HepG2 (cell line): ENCODE measurements at regions of chr4 and their contacts with region 1.

Region 1: GRCh38 chr4:94516067-94516466 is 64.3 kb downstream of the PDLIM5 start:
- DNase-seq: peak; percentile 76
- ATAC-seq: peak; percentile 65; the same call in 2 of the 3 replicates
- H3K4me3 ChIP-seq: no peak overlapping the region
- H3K27ac ChIP-seq: no peak overlapping the region
- H3K4me1 ChIP-seq: peaks cover 26% of the 10 kb centered on the region
- H3K27me3 ChIP-seq: no peaks in the 10 kb centered on the region
- CTCF ChIP-seq: no peak
- EP300 ChIP-seq: no peak
- POLR2A ChIP-seq: no peak
- RAD21 ChIP-seq: no peak

Region 2: DNA sequence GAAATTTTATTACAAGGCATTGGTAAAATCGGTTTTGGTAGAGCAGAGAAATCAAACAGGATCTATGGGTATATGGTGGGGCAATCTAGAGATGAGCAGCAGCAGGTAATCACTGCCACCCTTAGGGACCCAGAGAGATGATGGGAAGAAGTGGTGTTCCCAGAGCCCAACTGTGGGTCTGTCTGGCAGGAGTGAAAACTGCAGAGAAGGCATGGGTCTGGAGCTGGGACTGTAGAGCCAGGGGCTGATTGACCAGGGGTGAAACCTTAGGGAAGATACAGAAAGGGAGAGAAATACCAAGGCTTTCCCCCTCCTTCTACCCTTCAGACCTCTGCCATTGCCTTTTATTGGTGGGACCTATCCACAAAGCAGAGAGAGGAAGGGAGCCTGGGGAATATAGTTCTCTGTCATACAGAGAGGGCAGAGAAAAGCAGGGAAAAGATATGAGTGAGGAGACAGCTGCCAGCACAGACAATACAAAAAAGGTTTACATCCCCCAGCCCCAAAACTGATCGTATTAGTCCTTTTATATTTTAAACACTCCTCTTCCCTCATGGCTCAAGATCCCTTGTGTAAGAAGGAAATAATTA is 35.6 kb before region 1 on chr4:
- CTCF ChIA-PET with region 1: no interaction called
- POLR2A ChIA-PET with region 1: no interaction called
- in situ Hi-C with region 1: no loop called
- intact Hi-C with region 1: loop called (anchors 5 kb)
- DNase-seq: no peak
- ATAC-seq: peak; percentile 70
- H3K4me3 ChIP-seq: no peak overlapping the region
- H3K27ac ChIP-seq: no peak overlapping the region
- H3K4me1 ChIP-seq: peaks cover 29% of the 10 kb centered on the region
- H3K27me3 ChIP-seq: no peaks in the 10 kb centered on the region
- CTCF ChIP-seq: no peak
- EP300 ChIP-seq: no peak
- POLR2A ChIP-seq: no peak
- RAD21 ChIP-seq: no peak

Region 3: GRCh38 chr4:94548571-94548970 is 32.5 kb after region 1 on chr4:
- CTCF ChIA-PET with region 1: no interaction called
- POLR2A ChIA-PET with region 1: no interaction called
- in situ Hi-C with region 1: no loop called
- intact Hi-C with region 1: no loop called
- DNase-seq: peak; percentile 71
- ATAC-seq: peak; percentile 72
- H3K4me3 ChIP-seq: no peak overlapping the region
- H3K27ac ChIP-seq: no peak overlapping the region
- H3K4me1 ChIP-seq: peaks cover 50% of the 10 kb centered on the region
- H3K27me3 ChIP-seq: no peaks in the 10 kb centered on the region
- CTCF ChIP-seq: no peak
- EP300 ChIP-seq: no peak
- POLR2A ChIP-seq: no peak
- RAD21 ChIP-seq: no peak

Region 4: GRCh38 chr4:95165926-95166524 is 650.0 kb after region 1 on chr4:
- CTCF ChIA-PET with region 1: no interaction called
- POLR2A ChIA-PET with region 1: no interaction called
- in situ Hi-C with region 1: no loop called
- intact Hi-C with region 1: no loop called
- DNase-seq: peak; percentile 54
- ATAC-seq: peak; percentile 84
- H3K4me3 ChIP-seq: no peak overlapping the region
- H3K27ac ChIP-seq: no peak overlapping the region
- H3K4me1 ChIP-seq: no peaks in the 10 kb centered on the region
- H3K27me3 ChIP-seq: no peaks in the 10 kb centered on the region; a peak in 1 of 5 replicates
- CTCF ChIP-seq: peak; percentile 76
- EP300 ChIP-seq: no peak
- POLR2A ChIP-seq: no peak
- RAD21 ChIP-seq: peak; percentile 51